T-cell (primary cell): ENCODE measurements at regions of chr5 and their contacts with region 1.

Region 1: DNA sequence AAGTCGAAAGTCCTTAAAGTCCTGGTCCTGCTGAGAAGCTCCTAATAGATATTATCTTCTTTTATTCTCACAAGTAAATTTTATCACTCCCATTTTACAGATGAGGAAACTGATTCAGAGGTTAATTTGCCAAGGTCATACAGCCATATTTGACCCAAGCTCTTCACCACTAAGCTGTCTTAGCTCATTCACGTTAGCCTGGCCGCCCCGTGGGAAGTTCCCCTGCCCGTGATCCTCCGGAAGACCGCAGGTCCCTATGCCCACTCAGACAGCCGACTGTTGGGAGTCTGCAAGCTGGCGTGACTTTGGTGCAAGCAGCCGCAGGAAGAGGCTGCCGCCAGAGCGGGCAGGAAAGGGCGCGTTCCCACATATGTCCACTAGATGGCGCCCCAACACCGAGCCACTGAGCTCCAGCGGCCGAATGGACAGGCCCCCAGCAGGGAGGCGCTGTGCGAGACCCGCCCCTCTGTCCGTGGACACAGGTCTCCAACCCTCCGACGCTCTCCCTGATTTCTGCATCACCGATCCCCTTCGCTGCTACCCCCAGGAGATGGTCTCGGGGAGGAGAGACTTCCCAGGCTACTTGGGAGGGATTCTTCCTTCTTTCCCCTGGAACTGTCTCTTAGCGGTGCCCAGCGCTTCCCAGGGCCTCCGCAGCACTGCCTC is 10.0 kb upstream of the ARAP3 start:
- DNase-seq: peak; percentile 42 to 91 (median 75)
- ATAC-seq: peak; percentile 68 to 84 (median 78)
- H3K4me3 ChIP-seq: peak overlapping the region; percentile 34 to 39
- H3K4me3 Mint-ChIP-seq: peak overlapping the region; percentile 60 to 73 (median 66)
- H3K27ac ChIP-seq: no peak overlapping the region
- H3K27ac Mint-ChIP-seq: peak overlapping the region; percentile 34 to 44
- H3K4me1 ChIP-seq: peaks cover 0 to 20% of the 10 kb centered on the region in 2 experiments
- H3K4me1 Mint-ChIP-seq: peaks cover 23 to 25% (median 25%) of the 10 kb centered on the region in 3 donors
- H3K27me3 ChIP-seq: peaks cover 0 to 25% of the 10 kb centered on the region in 2 experiments
- H3K27me3 Mint-ChIP-seq: peaks cover 13 to 20% of the 10 kb centered on the region in 2 donors

Region 2: DNA sequence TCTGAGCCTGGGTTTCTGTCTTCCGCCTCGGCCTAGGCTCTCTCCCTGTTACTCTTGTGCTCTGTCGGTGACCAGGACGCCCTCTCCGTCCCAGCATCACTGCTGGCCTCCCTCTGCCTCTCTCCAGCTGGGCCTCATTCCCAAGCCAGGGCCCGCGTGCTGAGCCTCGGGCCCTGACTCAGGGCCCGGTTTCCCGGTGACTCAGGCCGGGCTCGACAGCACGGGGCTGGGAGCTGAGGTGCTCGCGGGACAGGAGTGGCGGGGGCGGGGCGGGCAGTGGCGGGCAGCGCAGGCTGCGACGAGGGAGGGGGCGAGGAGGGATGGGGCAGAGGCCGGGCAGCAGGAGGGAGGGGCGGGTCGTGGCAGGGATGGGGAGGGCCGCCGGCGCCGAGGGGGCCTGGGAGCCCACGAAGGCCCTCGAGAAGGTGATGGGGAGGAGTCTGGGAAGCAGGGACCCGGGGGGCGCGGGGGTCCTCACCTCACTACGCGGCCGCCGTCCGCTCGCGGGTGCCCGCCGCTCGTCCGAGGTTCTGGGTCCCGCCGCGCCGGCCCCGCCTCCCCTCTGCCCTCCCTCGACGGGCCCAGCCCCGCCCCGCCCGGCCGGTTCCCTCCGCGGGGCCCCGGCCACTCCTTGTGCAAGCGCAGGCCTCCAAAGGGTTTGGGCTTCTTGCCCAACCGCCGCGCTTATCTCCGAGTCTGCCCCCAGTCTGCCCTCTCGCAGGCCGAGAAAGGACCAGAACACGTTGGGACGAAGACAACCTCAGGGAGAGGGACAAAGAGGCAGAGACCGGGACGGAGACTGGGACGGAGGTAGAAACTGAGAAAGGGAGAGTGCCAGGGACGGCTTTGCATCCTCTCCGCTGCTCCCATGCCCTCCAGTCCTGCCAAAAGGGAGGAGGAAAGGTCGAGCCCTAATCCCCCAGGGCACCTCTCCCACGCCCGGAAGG is 10.0 kb before region 1 on chr5 and contains the start of gene ARAP3:
- CTCF ChIA-PET with region 1: interaction called, 5 to 16 read pairs
- POLR2A ChIA-PET with region 1: no interaction called
- DNase-seq: peak in 21 of 35 experiments; percentile 9 to 58 (median 26)
- ATAC-seq: peak; percentile 43 to 67 (median 60)
- H3K4me3 ChIP-seq: peak within 1 kb of the TSS; percentile 53 to 67
- H3K4me3 Mint-ChIP-seq: peak within 1 kb of the TSS; percentile 64 to 83 (median 76)
- H3K27ac ChIP-seq: peak within 1 kb of the TSS; percentile 34
- H3K27ac Mint-ChIP-seq: peak within 1 kb of the TSS; percentile 75 to 89
- H3K4me1 ChIP-seq: peaks cover 14 to 37% of the 10 kb centered on the region in 2 experiments
- H3K4me1 Mint-ChIP-seq: peaks cover 26 to 36% (median 27%) of the 10 kb centered on the region in 3 donors
- H3K27me3 ChIP-seq: peaks cover 0 to under 1% of the 10 kb centered on the region in 2 experiments
- H3K27me3 Mint-ChIP-seq: peaks cover 0 to 3% of the 10 kb centered on the region in 2 donors
- total RNA-seq, gene ARAP3: 1.2 to 25.6 (median 20.5) TPM

Region 3: DNA sequence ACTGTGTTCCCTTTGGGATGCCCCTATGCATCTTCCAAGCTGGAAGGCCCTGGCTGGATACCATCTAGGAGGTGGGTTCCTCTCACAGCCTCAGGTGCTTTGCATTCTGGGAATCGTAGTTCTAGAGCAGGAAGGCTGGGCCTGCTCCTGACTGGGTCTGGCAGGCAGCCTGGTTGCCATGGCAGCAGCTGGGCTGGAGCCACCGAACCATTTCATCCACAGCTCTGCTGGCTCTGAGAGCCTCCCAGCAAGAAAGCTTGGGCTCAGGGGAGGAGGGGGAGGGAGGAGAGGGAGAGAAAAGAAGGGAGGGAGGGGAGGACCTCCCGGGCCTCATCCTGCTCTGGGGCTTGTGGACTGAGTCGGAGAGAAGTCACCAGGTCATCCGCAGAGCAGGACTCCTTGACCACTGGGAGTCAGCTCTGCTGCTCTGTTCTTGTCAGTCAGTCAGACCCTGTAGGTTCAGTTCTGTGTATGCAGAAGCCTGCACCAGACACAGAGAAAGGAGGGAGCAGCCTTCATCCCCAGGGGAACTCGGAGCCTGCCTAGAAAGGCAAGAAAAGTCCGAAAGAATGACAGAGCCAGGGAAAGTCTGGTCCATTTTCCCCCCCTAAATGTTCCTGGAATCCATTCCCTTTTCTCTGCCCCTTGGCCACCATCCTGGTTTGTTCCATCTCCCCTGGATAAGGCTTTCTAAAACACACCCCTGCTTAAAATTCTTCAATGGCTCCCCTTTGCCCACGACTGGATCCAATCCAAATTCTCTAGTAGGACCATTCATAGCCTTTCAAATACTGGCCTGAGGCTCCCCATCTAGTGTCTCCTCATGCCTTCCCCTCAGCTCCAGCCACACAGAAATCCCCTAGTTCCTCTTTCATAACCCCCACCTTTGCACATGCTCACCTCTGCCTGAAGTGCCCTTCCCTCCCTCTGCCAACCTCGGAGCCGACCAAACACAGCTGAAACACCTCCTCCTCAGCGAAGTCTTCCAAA is 55.4 kb after region 1 on chr5:
- CTCF ChIA-PET with region 1: no interaction called
- POLR2A ChIA-PET with region 1: no interaction called
- DNase-seq: no peak
- ATAC-seq: no peak
- H3K4me3 ChIP-seq: no peak overlapping the region
- H3K4me3 Mint-ChIP-seq: no peak overlapping the region
- H3K27ac ChIP-seq: no peak overlapping the region
- H3K27ac Mint-ChIP-seq: no peak overlapping the region
- H3K4me1 ChIP-seq: no peaks in the 10 kb centered on the region
- H3K4me1 Mint-ChIP-seq: no peaks in the 10 kb centered on the region
- H3K27me3 ChIP-seq: peaks cover 0 to 46% of the 10 kb centered on the region in 2 experiments
- H3K27me3 Mint-ChIP-seq: peaks cover 71 to 76% of the 10 kb centered on the region in 2 donors

Region 4: DNA sequence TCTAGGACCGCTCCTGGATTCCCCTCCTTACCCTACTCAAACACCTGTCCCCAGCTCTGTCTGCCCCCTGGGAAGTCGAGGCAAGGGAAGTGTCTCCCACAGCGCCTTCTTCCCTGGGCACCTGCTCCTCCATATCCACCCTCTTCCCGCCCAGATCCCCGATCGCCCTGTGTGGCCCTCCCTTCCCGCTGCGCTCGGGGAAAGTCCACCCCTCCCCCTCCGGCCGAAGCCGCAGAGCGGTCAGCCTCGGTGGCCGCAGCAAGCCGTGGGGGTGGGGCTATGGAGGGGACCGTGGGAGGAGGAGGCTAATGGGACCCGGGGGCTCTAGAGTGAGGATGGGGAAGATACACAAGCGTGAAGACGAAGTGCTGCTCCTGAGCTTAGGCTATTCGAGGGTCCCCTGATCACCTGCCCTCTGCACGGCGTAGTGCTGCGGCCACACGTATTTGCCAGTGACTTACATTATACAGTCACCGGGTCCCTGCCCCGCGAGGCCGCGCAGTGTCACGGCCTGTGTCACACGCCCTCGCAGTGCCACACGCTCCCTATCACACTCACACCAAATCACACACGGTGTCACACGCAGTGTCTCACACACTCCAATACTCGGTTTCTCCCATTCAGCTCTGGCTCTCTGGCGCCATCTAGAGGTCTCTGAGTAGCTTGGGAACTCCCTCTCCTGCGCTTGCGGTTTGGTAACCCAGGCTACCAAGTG is 186.9 kb after region 1 on chr5:
- CTCF ChIA-PET with region 1: interaction called, 27 to 54 read pairs
- POLR2A ChIA-PET with region 1: no interaction called
- DNase-seq: peak; percentile 75 to 98 (median 84)
- ATAC-seq: peak; percentile 81 to 88 (median 83)
- H3K4me3 ChIP-seq: peak overlapping the region; percentile 46 to 61
- H3K4me3 Mint-ChIP-seq: peak overlapping the region; percentile 64 to 81 (median 80)
- H3K27ac ChIP-seq: no peak overlapping the region
- H3K27ac Mint-ChIP-seq: no peak overlapping the region
- H3K4me1 ChIP-seq: peaks cover 10 to 53% of the 10 kb centered on the region in 2 experiments
- H3K4me1 Mint-ChIP-seq: peaks cover 30 to 34% (median 33%) of the 10 kb centered on the region in 3 donors
- H3K27me3 ChIP-seq: peaks cover 20 to 94% of the 10 kb centered on the region in 2 experiments
- H3K27me3 Mint-ChIP-seq: peaks cover 70 to 80% of the 10 kb centered on the region in 2 donors

Region 5: DNA sequence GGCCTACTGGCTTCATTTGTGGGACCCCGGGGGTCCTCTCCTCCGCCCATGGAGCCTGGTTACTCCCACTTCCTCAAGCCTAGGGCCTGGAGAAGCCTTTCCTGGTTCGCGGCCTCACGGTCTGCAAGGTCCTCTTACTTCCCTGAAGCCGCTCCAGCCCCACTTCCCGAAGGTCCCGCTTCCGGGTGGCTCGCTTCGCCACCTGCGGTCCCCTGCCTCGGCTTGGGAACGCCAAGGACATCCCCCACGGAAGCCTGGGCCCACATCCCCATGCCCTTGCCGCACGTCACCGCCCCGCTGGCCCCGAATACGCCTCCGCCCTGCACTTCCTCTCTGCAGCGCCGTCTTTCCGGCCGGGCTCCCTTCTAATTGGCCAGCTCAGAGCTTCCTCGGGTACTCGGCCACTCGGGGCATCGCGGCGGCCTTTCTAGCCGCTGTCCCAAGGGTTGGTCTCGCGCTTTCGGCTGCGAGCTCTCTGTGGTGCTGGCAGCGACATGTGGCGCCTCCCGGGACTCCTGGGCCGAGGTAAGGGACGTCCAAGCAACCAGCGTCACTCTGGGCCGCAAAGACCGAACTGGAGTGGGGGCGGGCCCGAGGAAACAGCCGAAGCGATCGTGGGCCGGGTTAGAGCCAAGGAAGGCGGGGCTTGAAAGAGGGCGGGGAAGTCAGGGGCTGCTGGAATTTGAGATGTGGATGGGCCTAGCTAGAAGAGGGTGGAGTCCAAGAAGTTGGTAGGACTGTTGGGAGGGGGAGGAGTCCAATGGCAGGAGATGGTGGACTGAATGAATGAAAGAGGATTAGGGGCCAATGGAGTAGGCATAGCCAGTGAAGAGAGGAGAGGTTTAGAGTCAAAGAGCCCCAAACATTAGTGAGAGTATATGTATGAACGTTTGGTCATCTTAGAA is 231.7 kb after region 1 on chr5 and contains the start of gene DELE1:
- CTCF ChIA-PET with region 1: interaction called in 1 of 2 experiments, 12 read pairs
- POLR2A ChIA-PET with region 1: no interaction called
- DNase-seq: peak; percentile 83 to 93 (median 87)
- ATAC-seq: peak; percentile 96 to 98 (median 98)
- H3K4me3 ChIP-seq: peak within 1 kb of the TSS; percentile 73 to 76
- H3K4me3 Mint-ChIP-seq: peak within 1 kb of the TSS; percentile 89 to 93 (median 91)
- H3K27ac ChIP-seq: peak within 1 kb of the TSS; percentile 96
- H3K27ac Mint-ChIP-seq: peak within 1 kb of the TSS; percentile 93 to 94
- H3K4me1 ChIP-seq: peaks cover 5 to 24% of the 10 kb centered on the region in 2 experiments
- H3K4me1 Mint-ChIP-seq: peaks cover 35 to 43% (median 42%) of the 10 kb centered on the region in 3 donors
- H3K27me3 ChIP-seq: no peaks in the 10 kb centered on the region
- H3K27me3 Mint-ChIP-seq: no peaks in the 10 kb centered on the region
- total RNA-seq, gene DELE1: 80.3 to 130 (median 85.2) TPM

Region 6: DNA sequence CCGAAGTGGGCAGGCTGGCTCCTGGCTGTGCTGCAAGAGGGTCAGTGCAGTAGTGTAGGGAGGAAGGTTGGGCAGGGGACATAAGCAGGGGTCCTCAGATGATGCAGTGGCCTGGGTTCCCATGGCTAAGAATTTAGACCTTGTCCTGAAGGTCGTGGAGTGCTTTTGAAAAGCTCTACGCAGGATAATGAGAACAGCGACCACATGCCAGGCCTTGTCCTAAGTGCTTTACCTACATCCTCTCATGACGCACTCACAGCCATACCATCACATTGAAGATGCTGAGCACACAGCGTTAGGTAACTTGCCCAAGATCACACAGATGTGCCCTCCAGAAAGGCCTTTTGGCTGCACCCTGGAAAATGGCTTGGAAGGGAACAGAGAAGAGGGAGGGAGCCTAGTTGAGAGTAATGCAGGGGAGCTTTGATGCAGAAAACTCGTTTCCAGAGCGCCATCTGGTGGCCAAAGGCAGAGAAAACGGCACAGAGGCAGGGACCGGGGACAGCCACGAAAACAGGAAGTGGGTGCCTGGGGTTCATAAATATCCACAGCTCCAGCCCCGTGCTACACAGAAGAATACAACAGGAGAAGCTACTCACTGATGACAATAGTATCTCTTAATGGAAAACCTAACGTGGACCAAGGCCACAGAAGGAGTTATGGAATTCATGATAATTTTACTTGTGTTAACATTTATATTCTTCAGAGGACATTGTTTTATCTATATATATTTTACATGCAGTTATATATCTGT is 268.6 kb after region 1 on chr5:
- CTCF ChIA-PET with region 1: interaction called, 21 to 75 read pairs
- POLR2A ChIA-PET with region 1: no interaction called
- DNase-seq: peak; percentile 79 to 96 (median 88)
- ATAC-seq: peak; percentile 95 to 97 (median 96)
- H3K4me3 ChIP-seq: no peak overlapping the region
- H3K4me3 Mint-ChIP-seq: peak overlapping the region; percentile 25 to 39 (median 26)
- H3K27ac ChIP-seq: peak overlapping the region; percentile 45
- H3K27ac Mint-ChIP-seq: peak overlapping the region; percentile 94
- H3K4me1 ChIP-seq: peaks cover 13 to 47% of the 10 kb centered on the region in 2 experiments
- H3K4me1 Mint-ChIP-seq: peaks cover 41 to 51% (median 50%) of the 10 kb centered on the region in 3 donors
- H3K27me3 ChIP-seq: no peaks in the 10 kb centered on the region
- H3K27me3 Mint-ChIP-seq: no peaks in the 10 kb centered on the region

Region 7: DNA sequence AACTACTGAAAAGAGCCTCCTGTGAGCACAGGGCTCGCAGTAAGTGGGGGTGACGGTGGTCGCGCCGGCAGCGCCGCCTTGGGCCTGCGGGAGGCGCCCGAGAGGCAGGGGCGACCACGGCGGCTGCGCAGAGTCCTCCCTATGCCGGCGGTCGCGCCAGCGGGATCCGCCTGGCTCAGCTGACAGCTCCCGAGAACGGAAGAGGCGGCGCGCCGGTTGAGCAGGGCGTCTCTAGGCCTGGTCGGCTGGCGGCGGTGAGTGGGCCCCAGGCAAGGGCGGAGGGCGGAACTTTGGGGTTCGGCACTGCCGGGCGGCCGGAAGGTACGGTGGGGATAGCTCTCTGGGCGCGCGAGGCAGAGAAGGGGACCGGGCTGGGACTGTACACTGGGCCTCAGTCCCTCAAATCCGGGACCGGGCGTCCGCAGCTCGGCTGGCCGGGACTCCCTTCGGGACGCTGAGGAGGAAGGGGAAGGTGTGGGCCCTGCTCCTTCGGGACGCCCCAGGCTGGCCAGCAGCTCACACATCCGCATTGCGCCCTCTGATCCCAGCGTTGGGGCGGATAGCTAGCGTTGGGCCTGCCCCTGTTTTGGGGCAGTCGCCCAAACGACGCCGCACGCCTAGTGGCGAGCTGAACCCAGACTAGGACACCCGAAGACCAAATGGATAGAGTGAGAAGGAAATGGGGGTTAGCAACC is 277.1 kb after region 1 on chr5 and contains the start of gene RNF14:
- CTCF ChIA-PET with region 1: interaction called, 3 to 15 read pairs
- POLR2A ChIA-PET with region 1: no interaction called
- DNase-seq: peak; percentile 86 to 95 (median 92)
- ATAC-seq: peak; percentile 96 to 98 (median 97)
- H3K4me3 ChIP-seq: peak within 1 kb of the TSS; percentile 92 to 96
- H3K4me3 Mint-ChIP-seq: peak within 1 kb of the TSS; percentile 90 to 96 (median 92)
- H3K27ac ChIP-seq: peak within 1 kb of the TSS; percentile 89
- H3K27ac Mint-ChIP-seq: peak within 1 kb of the TSS; percentile 94 to 96
- H3K4me1 ChIP-seq: peaks cover 17 to 19% of the 10 kb centered on the region in 2 experiments
- H3K4me1 Mint-ChIP-seq: peaks cover 32 to 43% (median 38%) of the 10 kb centered on the region in 3 donors
- H3K27me3 ChIP-seq: no peaks in the 10 kb centered on the region
- H3K27me3 Mint-ChIP-seq: no peaks in the 10 kb centered on the region
- total RNA-seq, gene RNF14: 16.4 to 35.8 (median 28.2) TPM

Region 8: DNA sequence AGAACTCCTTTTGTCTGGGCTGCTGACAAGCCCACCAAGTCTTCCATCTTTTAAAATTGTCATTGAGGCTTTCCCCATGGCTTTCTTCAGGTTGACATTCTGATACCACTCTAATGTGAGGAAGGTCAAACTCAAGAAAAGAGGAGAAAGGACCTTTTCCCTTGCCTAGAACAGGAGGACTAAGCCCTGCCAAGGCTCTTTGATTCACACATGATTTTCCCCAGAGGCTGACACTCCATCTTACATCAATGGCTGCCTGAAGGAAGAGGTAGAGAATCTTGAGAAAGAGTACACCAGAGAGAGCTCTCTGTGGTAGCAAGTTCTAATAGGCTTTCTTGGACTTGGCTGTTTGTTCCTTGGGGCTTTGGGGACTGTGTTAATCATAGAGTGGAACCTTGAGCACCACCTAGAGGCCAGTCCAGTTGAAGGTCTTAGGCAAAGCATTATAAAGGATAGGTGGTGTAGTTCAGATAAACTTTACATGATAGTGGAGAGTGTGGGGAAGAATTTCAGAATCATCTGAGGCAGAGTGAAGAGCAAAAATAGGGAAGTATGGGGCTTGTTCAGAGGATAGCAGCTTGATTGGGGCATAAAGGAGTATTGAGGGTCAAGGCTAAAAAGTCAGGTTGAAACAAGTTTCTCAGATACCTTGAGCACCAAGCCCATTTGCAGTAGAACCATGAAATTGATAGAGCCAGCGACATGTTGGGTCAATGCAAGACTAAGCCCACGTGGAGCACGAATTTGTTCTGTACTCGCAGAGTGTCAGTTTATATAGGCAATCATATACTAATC is 453.3 kb after region 1 on chr5:
- CTCF ChIA-PET with region 1: interaction called in 1 of 2 experiments, 15 read pairs
- POLR2A ChIA-PET with region 1: no interaction called
- DNase-seq: peak in 34 of 35 experiments; percentile 28 to 76 (median 52)
- ATAC-seq: peak; percentile 64 to 86 (median 80)
- H3K4me3 ChIP-seq: no peak overlapping the region
- H3K4me3 Mint-ChIP-seq: no peak overlapping the region
- H3K27ac ChIP-seq: no peak overlapping the region
- H3K27ac Mint-ChIP-seq: no peak overlapping the region
- H3K4me1 ChIP-seq: no peaks in the 10 kb centered on the region
- H3K4me1 Mint-ChIP-seq: peaks cover 0 to 16% (median 7%) of the 10 kb centered on the region in 3 donors
- H3K27me3 ChIP-seq: no peaks in the 10 kb centered on the region
- H3K27me3 Mint-ChIP-seq: no peaks in the 10 kb centered on the region